PC-9 (cell line): ENCODE measurements at regions of chr5 and their contacts with region 1.

Region 1: DNA sequence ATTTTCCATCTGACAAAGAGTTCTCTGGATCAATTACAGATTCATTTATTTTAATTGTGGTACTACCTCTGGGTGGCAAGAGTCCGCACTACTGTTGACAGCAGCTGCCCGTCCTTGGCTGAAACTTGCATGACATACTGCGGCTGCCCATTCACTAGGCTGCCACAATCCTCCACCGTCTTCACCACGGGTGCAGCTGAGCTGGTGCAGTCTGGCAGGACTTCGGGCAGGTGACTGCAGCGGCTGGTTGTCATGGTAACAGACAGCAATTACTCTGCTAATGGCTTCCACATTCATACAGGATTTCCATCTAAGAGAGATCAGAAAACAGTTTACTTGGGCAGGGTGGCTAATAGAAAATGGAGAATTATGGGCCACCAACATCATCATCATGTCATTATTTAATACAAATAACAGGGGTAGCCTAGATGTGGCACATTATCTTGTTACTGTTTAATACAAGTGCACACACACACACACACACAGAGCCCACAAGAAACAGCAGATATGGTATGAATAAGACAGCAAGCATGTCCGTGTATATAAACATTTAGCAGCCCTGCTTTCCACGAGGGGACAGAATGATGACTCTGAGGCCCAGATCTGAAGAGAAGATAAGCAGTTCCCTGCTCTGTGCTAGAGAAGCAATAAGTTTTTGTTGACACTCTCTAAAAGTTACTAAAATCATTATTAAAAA is 112.3 kb downstream of the MARCHF3 start:
- DNase-seq: peak in 1 of 2 experiments; percentile 63
- H3K4me3 ChIP-seq: no peak overlapping the region
- H3K27ac ChIP-seq: peak overlapping the region; percentile 53
- H3K4me1 ChIP-seq: peaks cover 19% of the 10 kb centered on the region
- H3K27me3 ChIP-seq: no peaks in the 10 kb centered on the region
- CTCF ChIP-seq: no peak

Region 2: GRCh38 chr5:126938466-126938865 is 20.4 kb after region 1 on chr5:
- CTCF ChIA-PET with region 1: interaction called, 10 read pairs
- POLR2A ChIA-PET with region 1: no interaction called
- intact Hi-C with region 1: no loop called
- DNase-seq: peak in 1 of 2 experiments; percentile 58
- H3K4me3 ChIP-seq: no peak overlapping the region
- H3K27ac ChIP-seq: no peak overlapping the region
- H3K4me1 ChIP-seq: peaks cover 12% of the 10 kb centered on the region; the same call in 1 of the 2 replicates
- H3K27me3 ChIP-seq: no peaks in the 10 kb centered on the region
- CTCF ChIP-seq: no peak